Head of caudate nucleus (tissue), 42 donors: ENCODE measurements at regions of chr2 and their contacts with region 1.

Region 1: DNA sequence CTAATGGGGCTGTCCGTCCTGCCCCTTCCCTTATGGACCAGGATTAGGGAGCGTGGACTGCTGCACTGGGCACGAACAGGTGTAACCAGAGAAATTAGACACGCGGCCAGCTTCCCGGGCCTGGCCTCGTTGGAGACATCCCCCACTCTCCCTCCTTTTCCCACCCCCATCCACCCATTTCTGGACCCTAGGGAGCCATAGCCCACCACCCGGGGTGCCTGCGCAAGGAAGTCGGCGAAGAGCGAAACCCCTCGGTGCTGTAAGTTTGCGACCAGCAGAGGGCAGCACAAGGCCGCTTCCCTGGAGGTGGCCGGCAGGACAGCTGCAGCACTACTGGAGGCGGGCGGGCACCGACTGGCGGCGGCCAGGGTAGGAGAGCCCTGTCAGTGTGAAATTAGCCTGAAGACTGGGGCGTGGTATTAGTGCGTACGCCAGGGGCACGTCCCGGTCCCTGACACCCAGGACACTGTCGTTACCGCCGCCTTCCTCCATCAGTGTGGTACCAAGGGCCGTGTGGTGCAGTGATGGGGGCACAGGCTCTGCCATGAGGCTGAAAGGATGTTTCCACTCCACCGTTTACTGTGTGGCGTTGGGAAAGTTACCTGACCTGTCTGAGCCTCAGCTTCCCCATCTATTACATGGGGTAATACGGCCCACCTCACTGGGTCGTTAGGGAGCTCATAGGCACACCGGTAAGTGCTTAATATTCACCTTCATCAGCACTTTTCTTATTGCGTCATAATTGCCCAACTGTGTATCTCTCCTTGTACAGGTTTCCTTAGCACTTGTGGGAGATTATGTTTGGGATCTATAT is 36.0 kb upstream of the CD207 start:
- DNase-seq: peak; percentile 53 to 93 (median 83)

Region 2: DNA sequence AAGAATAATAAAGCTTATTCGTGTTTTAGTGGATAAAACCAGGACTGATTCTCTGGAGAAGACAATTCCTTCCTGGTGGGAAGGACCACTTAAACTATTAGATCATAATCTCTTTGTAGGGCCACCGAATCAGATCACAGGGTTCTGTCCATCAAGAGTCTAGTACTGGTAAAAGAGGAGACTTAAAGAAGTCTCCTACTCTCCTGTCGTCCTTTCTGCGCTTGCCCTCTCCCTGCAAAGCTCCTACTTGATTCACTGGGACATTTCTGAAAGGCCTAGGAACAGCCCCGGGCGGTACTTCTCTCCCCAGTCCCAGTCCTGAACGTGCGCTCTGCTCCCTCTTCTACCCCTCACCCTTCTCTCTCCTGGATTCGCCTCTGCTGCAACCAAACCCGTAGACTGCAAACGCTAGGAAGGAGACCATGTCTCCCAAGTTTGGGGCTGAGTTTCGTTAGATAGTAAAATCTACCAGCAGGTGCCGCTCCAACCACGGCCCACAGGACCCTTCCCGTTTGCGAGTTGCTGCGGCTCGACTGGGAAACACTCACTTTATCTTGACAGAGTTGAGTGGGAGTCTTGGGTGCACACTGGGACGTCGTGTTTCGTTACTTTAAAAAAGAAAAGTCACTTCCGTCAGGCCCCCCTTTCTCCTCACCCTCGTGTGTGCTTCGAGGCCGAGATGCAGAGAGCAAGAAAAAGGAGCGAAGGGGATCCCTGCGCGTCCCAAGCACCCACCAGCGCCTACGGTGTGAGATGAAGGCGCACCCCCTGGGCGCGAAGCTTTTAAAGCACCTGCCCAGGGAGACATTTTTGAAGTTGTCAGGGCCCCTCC is 82.1 kb before region 1 on chr2:
- intact Hi-C with region 1: loop called (anchors 10 kb)
- DNase-seq: peak; percentile 67 to 92 (median 80)

Region 3: DNA sequence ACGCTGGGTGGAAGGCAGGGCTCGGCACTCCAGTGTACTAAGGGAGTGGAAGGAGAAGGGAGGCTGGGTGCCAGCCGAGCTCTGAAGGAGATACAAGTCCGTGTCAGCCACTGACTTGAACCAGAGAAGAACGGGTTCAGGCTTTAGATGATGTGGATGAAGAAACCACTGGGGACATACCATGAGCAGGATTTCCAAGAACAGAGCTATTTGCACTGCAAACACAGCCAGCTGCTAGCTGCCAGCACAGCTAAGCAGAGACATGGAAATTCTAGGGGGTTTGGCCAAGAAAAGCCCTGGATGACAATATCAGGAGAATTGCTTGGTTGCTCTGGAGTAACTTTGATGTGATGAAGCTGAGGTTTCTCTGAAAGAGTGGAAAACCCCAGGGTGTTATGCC is 41.2 kb before region 1 on chr2:
- intact Hi-C with region 1: no loop called
- DNase-seq: no peak

Region 4: DNA sequence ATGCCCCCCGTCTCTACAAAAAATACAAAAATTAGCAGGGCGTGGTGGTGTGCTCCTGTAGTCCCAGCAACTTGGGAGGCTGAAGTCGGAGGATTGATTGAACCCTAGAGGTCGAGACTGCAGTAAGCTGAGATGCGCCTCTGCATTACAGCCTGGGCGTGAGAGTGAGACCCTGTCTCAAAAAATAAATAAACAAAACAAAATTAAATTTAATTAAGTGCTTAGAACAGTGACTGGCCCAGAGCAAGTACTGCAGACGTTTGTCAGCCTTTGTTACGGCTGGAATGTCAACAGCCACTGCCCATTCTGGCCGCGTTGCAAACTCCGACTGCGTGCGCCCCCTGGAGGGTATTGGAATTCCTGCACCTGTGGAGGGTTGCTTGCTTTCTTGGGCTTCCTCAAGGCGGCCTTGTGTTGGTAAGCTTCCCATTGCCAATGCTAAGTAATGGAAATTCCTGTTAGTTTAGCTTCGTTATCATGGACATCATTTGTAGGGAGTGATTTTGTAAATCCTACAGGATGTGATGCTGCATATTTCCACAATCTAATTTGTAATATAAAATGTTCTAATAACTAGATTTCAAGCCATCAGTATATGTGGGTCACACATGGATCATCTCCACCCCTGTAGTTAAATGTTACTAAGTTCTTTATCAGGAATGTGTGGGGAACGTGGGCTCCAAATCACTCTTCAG is 48.2 kb after region 1 on chr2:
- intact Hi-C with region 1: loop called (anchors 5 kb)
- DNase-seq: peak in 41 of 42 donors; percentile 50 to 92 (median 77)

Region 5: DNA sequence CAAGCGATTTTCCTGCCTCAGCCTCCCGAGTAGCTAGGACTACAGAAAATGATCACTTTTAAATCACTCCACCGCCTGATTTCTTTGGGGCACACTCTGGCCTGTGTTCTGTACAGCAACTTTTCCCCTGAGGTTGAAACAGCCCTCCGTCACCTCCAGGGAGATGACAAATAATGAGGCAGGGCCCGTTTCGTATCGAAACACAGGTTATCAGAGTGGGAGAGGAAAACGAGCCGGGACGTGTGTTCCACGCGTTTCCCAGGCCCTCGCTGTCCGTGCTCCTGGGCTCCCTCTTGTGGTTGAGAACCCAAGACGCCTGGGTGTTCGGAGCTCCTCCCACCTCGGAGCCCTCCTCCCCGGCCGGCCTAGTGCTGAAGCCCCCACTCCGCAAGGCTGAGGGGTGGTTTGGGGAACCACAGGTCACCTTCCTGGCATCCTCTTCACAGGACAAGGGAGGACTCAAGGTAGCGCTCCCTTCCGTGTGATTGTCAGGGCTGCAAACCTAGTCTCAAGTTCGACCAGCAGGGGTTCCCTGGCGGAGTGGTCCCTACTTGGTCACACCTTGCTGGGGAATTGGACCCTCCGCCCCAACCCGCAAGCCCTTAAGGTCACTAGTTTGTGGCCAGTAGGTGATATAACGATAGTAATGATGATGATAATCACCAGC is 76.9 kb after region 1 on chr2:
- intact Hi-C with region 1: loop called (anchors 5 kb)
- DNase-seq: peak; percentile 58 to 92 (median 84)